Right cardiac atrium (tissue), 5 donors: ENCODE measurements at regions of chr15 and their contacts with region 1.

Region 1: GRCh38 chr15:23606226-23606625 is 40.8 kb downstream of the MKRN3 start:
- DNase-seq: no peak
- ATAC-seq: no peak
- H3K4me3 ChIP-seq: no peak overlapping the region
- H3K27ac ChIP-seq: no peak overlapping the region
- H3K4me1 ChIP-seq: no peaks in the 10 kb centered on the region
- H3K27me3 ChIP-seq: no peaks in the 10 kb centered on the region

Region 2: GRCh38 chr15:23663225-23663624 is 57.0 kb after region 1 on chr15:
- intact Hi-C with region 1: loop called in 1 of 4 experiments (anchors 10 kb)
- DNase-seq: no peak
- ATAC-seq: no peak
- H3K4me3 ChIP-seq: no peak overlapping the region
- H3K27ac ChIP-seq: no peak overlapping the region
- H3K4me1 ChIP-seq: no peaks in the 10 kb centered on the region
- H3K27me3 ChIP-seq: peaks cover 2% of the 10 kb centered on the region

Region 3: GRCh38 chr15:23708332-23708731 is 102.1 kb after region 1 on chr15:
- intact Hi-C with region 1: no loop called
- DNase-seq: no peak
- ATAC-seq: no peak
- H3K4me3 ChIP-seq: no peak overlapping the region
- H3K27ac ChIP-seq: no peak overlapping the region
- H3K4me1 ChIP-seq: no peaks in the 10 kb centered on the region
- H3K27me3 ChIP-seq: no peaks in the 10 kb centered on the region